ENCODE measurements at regions of chr17 and their contacts with region 1.

Region 1: GRCh38 chr17:65055348-65056261 is 935 bp downstream of the GNA13 start:
- DNase-seq: peak; percentile 47 to 79 (median 66)
- H3K4me3 ChIP-seq: peak overlapping the region; percentile 64 to 99 (median 87)
- H3K27ac ChIP-seq: peak overlapping the region; percentile 81 to 100 (median 99)
- H3K27me3 ChIP-seq: no peaks in the 10 kb centered on the region
- CTCF ChIP-seq: peak in 3 of 56 donors; percentile 6 to 13 (median 9)

Region 2: GRCh38 chr17:64975329-64976087 is 80.1 kb before region 1 on chr17:
- intact Hi-C with region 1: loop called (anchors 1 to 2 kb)
- DNase-seq: peak; percentile 88 to 96 (median 92)
- H3K4me3 ChIP-seq: peak overlapping the region; percentile 65 to 98 (median 87)
- H3K27ac ChIP-seq: peak overlapping the region; percentile 77 to 99 (median 97)
- H3K27me3 ChIP-seq: no peaks in the 10 kb centered on the region
- CTCF ChIP-seq: peak in 25 of 56 donors; percentile 4 to 59 (median 24)

Region 3: GRCh38 chr17:65100316-65101140 is 44.9 kb after region 1 on chr17:
- intact Hi-C with region 1: loop called in 1 of 2 experiments (anchors 2 kb)
- DNase-seq: peak; percentile 81 to 92 (median 84)
- H3K4me3 ChIP-seq: peak overlapping the region; percentile 38 to 79 (median 62)
- H3K27ac ChIP-seq: peak overlapping the region in 44 of 59 donors; percentile 1 to 81 (median 52)
- H3K27me3 ChIP-seq: no peaks in the 10 kb centered on the region
- CTCF ChIP-seq: peak; percentile 30 to 92 (median 80)

Region 4: DNA sequence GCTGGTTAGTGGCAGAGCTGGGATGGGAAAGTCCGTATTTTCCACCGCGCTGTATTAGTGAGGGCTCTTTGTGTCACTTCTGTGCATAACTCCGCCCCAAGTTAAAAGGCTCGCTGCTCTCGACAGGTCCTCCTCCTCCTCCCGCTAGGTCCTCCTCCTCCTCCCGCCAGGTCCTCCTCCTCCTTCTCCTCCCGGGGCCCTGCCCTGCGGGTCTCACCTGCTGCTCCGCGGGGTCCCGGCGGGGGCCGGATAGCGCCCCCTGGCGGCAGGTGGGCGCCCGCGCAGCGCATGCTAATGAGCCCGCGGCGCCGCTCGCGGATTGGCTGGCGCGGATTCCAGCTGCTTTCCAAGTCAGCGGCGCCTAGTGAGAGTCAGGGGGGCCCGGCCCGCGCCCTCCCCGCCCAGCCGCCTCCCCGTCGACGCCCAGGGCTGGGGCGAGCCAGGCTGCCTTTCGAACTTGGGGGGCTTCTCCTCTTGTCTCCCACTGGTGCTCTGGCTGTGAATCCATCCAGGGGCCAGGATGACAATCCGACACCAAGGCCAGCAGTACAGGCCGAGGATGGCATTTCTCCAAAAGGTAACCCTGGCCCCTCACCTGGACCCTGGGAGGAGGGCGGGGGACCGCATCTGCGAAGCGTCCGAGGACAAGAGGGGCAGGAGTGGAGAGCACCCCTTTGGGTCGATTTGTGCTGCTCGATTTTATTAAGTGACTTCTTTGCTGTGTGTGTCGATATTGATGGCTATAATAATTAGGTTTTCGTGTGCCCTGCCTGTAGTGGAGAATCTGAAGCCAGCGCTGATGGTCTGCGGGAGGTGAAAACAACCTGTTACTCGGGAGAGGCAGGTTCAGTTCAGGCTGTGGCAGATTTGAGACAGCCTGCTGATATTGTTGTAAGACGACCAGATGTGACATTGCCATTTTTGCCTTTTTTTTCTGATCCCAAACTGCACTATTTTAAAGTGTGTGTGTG is 81.7 kb after region 1 on chr17 and contains the start of gene RGS9:
- intact Hi-C with region 1: loop called (anchors 5 to 10 kb)
- DNase-seq: peak; percentile 75 to 90 (median 82)
- H3K4me3 ChIP-seq: peak within 1 kb of the TSS; percentile 33 to 72 (median 61)
- H3K27ac ChIP-seq: peak within 1 kb of the TSS in 7 of 59 donors; percentile 3 to 62 (median 56)
- H3K27me3 ChIP-seq: peaks cover 0 to 8% (median 0%) of the 10 kb centered on the region in 45 donors
- CTCF ChIP-seq: peak; percentile 73 to 98 (median 92)
- total RNA-seq, gene RGS9: 4.3 to 19.6 (median 10.5) TPM